ENCODE measurements at regions of chr5 and their contacts with region 1.

Region 1: GRCh38 chr5:124935065-124935464 is 188.6 kb upstream of the ZNF608 start:
- DNase-seq: peak; percentile 87
- ATAC-seq: peak; percentile 80
- H3K4me3 ChIP-seq: no peak overlapping the region
- H3K27ac ChIP-seq: peak overlapping the region; percentile 89
- H3K4me1 ChIP-seq: peaks cover 21% of the 10 kb centered on the region
- H3K27me3 ChIP-seq: no peaks in the 10 kb centered on the region
- CTCF ChIP-seq: no peak
- EP300 ChIP-seq: peak; percentile 91 to 95
- POLR2A ChIP-seq: peak; percentile 30; the same call in 1 of the 2 replicates
- RAD21 ChIP-seq: peak; percentile 29; the same call in 1 of the 2 replicates

Region 2: GRCh38 chr5:124034963-124035362 is 900.1 kb before region 1 on chr5:
- CTCF ChIA-PET with region 1: no interaction called
- POLR2A ChIA-PET with region 1: no interaction called
- RAD21 ChIA-PET with region 1: no interaction called
- SMC1A ChIA-PET with region 1: no interaction called
- in situ Hi-C with region 1: no loop called
- intact Hi-C with region 1: loop called (anchors 10 kb)
- DNase-seq: peak; percentile 84
- ATAC-seq: peak; percentile 98
- H3K4me3 ChIP-seq: no peak overlapping the region
- H3K27ac ChIP-seq: peak overlapping the region; percentile 53; the same call in 1 of the 2 replicates
- H3K4me1 ChIP-seq: peaks cover 22% of the 10 kb centered on the region
- H3K27me3 ChIP-seq: no peaks in the 10 kb centered on the region
- CTCF ChIP-seq: no peak
- EP300 ChIP-seq: peak; percentile 97 to 99
- POLR2A ChIP-seq: no peak
- RAD21 ChIP-seq: 0 out of 2 replicates have a peak, but pooled peaks have one; percentile 9

Region 3: GRCh38 chr5:124583469-124584350 is 351.4 kb before region 1 on chr5:
- CTCF ChIA-PET with region 1: no interaction called
- POLR2A ChIA-PET with region 1: no interaction called
- RAD21 ChIA-PET with region 1: no interaction called
- SMC1A ChIA-PET with region 1: no interaction called
- in situ Hi-C with region 1: no loop called
- intact Hi-C with region 1: loop called (anchors 2 kb)
- DNase-seq: peak; percentile 89
- ATAC-seq: peak; percentile 99
- H3K4me3 ChIP-seq: no peak overlapping the region
- H3K27ac ChIP-seq: peak overlapping the region; percentile 42
- H3K4me1 ChIP-seq: peaks cover 14% of the 10 kb centered on the region; the same call in 1 of the 2 replicates
- H3K27me3 ChIP-seq: peaks cover 0 to 8% of the 10 kb centered on the region in 2 experiments
- CTCF ChIP-seq: no peak
- EP300 ChIP-seq: peak; percentile 59 to 95; a peak in 3 of 4 replicates
- POLR2A ChIP-seq: no peak
- RAD21 ChIP-seq: no peak

Region 4: GRCh38 chr5:124908581-124909451 is 26.2 kb before region 1 on chr5:
- CTCF ChIA-PET with region 1: interaction called, 9 read pairs
- POLR2A ChIA-PET with region 1: interaction called, 4 read pairs
- RAD21 ChIA-PET with region 1: interaction called, 40 read pairs
- SMC1A ChIA-PET with region 1: interaction called, 45 read pairs
- in situ Hi-C with region 1: no loop called
- intact Hi-C with region 1: loop called (anchors 1 kb)
- DNase-seq: peak; percentile 75
- ATAC-seq: peak; percentile 88
- H3K4me3 ChIP-seq: no peak overlapping the region
- H3K27ac ChIP-seq: peak overlapping the region; percentile 51
- H3K4me1 ChIP-seq: peaks cover 41% of the 10 kb centered on the region
- H3K27me3 ChIP-seq: no peaks in the 10 kb centered on the region
- CTCF ChIP-seq: no peak
- EP300 ChIP-seq: peak; percentile 96 to 98
- POLR2A ChIP-seq: no peak
- RAD21 ChIP-seq: peak; percentile 20; the same call in 1 of the 2 replicates

Region 5: GRCh38 chr5:124952079-124952478 is 17.0 kb after region 1 on chr5:
- CTCF ChIA-PET with region 1: interaction called, 9 read pairs
- POLR2A ChIA-PET with region 1: interaction called, 5 read pairs
- RAD21 ChIA-PET with region 1: interaction called, 22 read pairs
- SMC1A ChIA-PET with region 1: interaction called, 48 read pairs
- in situ Hi-C with region 1: no loop called
- intact Hi-C with region 1: loop called (anchors 1 kb)
- DNase-seq: peak; percentile 69
- ATAC-seq: peak; percentile 98
- H3K4me3 ChIP-seq: peak overlapping the region; percentile 18; the same call in 1 of the 2 replicates
- H3K27ac ChIP-seq: peak overlapping the region; percentile 75
- H3K4me1 ChIP-seq: peaks cover 15% of the 10 kb centered on the region
- H3K27me3 ChIP-seq: no peaks in the 10 kb centered on the region
- CTCF ChIP-seq: no peak
- EP300 ChIP-seq: peak in 1 of 2 experiments; percentile 57; a peak in 1 of 4 replicates
- POLR2A ChIP-seq: no peak
- RAD21 ChIP-seq: peak; percentile 28

Region 6: DNA sequence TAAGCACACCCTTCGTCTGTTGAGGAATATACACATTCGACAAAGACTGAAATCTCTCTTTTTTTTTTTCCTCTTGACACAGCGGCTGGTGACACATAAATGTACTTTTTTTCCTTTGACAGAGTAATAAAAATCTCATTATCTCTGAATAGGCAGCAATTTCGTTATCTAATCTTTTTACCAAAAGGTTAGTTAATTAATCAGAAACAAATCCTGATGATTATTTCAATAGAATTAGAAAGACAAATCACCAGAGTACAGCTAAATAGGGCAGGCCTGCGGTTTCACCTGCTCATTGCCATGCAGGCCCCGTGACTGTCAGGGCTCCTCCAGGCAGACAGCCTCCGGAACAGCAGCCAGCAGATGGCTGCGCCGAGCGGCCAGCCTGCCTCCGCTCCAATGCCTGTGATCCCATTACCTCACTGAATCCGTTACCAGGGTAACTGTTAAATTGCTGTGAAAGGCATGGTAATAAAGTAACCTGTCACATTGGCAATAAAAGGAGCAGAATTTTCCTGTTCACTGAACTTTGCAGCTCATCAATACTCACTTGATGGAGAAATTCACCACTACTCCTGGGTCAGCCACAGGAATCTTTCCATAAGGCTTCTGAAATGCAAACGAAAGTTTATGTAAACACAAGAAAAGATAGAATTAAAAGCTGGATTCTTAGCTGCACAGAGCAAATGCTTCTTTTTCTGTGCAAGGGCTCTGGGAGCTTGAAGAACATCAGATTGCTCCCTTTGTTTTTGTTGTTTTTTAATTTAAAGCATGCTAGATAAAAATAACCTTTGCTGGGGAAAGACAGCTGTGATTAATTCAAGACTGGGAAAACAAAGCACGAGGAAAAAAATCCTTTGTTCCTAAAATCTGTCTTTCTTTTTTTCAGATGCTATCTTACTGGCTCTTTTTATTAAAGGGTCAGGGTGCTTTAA is 477.8 kb after region 1 on chr5:
- CTCF ChIA-PET with region 1: no interaction called
- POLR2A ChIA-PET with region 1: no interaction called
- RAD21 ChIA-PET with region 1: interaction called, 4 read pairs
- SMC1A ChIA-PET with region 1: no interaction called
- in situ Hi-C with region 1: loop called (anchors 10 kb)
- intact Hi-C with region 1: loop called (anchors 1 kb)
- DNase-seq: no peak
- ATAC-seq: peak; percentile 57
- H3K4me3 ChIP-seq: peak overlapping the region; percentile 51; the same call in 1 of the 2 replicates
- H3K27ac ChIP-seq: peak overlapping the region; percentile 88
- H3K4me1 ChIP-seq: peaks cover 43% of the 10 kb centered on the region
- H3K27me3 ChIP-seq: no peaks in the 10 kb centered on the region
- CTCF ChIP-seq: peak; percentile 2 to 23 (median 3); a peak in 1 of 6 replicates
- EP300 ChIP-seq: no peak
- POLR2A ChIP-seq: no peak
- RAD21 ChIP-seq: 0 out of 2 replicates have a peak, but pooled peaks have one; percentile 23